ENCODE measurements at regions of chr11 and their contacts with region 1.

Region 1: DNA sequence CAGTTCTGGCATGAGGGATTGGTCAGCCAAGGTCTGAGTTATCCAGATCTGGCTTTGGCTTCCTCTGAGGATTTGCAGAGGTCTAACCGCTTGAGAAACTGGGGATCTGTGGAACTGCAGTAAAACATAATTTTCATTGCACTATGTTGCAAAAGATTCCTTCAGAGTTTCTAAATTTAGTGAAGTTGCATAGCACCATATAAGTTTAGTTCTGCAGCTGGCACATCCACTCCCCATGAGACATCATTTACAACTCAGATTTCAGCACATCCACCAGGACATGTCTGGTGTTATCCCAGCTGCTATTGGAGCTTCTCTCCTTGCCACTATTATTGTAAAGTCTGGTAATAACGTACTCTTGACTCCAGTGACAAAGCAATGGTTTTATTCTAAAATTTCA is 181.5 kb downstream of the CWF19L2 start:
- DNase-seq: no peak
- ATAC-seq: no peak
- H3K4me3 ChIP-seq: no peak overlapping the region
- H3K4me3 Mint-ChIP-seq: no peak overlapping the region
- H3K27ac ChIP-seq: no peak overlapping the region
- H3K27ac Mint-ChIP-seq: no peak overlapping the region
- H3K4me1 ChIP-seq: no peaks in the 10 kb centered on the region
- H3K4me1 Mint-ChIP-seq: no peaks in the 10 kb centered on the region
- H3K27me3 ChIP-seq: no peaks in the 10 kb centered on the region
- H3K27me3 Mint-ChIP-seq: no peaks in the 10 kb centered on the region

Region 2: DNA sequence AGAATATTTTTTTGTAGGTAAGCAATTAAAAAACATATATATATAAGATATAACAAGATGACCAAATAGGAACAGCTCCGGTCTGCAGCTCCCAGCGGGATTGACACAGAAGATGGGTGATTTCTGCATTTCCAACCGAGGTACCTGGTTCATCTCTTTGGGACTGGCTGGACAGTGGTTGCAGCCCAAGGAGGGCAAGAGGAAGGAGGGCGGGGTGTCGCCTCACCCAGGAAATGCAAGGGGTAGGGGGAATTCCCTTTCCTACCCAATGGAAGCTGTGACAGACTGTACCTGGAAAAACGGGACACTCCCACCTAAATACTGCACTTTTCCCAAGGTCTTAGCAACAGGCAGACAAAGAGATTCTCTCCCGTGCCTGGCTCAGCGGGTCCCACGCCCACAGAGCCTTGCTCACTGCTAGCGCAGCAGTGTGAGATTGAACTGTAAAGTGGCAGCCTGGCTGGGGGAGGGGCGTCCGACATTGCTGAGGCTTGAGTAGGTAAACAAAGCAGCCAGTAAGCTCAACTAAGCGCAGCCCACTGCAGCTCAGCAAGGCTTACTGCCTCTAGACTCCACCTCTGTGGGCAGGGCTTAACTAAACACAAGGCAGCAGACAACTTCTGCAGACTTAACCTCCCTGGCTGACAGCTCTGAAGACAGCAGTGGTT is 17.7 kb after region 1 on chr11:
- CTCF ChIA-PET with region 1: no interaction called
- POLR2A ChIA-PET with region 1: no interaction called
- intact Hi-C with region 1: loop called in 1 of 2 experiments (anchors 2 kb)
- DNase-seq: no peak
- ATAC-seq: no peak
- H3K4me3 ChIP-seq: no peak overlapping the region
- H3K4me3 Mint-ChIP-seq: no peak overlapping the region
- H3K27ac ChIP-seq: no peak overlapping the region
- H3K27ac Mint-ChIP-seq: no peak overlapping the region
- H3K4me1 ChIP-seq: no peaks in the 10 kb centered on the region
- H3K4me1 Mint-ChIP-seq: peaks cover 0 to 6% (median 0%) of the 10 kb centered on the region in 7 donors
- H3K27me3 ChIP-seq: no peaks in the 10 kb centered on the region
- H3K27me3 Mint-ChIP-seq: no peaks in the 10 kb centered on the region